PC-9 (cell line): ENCODE measurements at regions of chr3 and their contacts with region 1.

Region 1: GRCh38 chr3:56702490-56703315 is 19.6 kb upstream of the TASOR start:
- DNase-seq: peak; percentile 25 to 53
- H3K4me3 ChIP-seq: no peak overlapping the region
- H3K27ac ChIP-seq: no peak overlapping the region
- H3K4me1 ChIP-seq: no peaks in the 10 kb centered on the region
- H3K27me3 ChIP-seq: no peaks in the 10 kb centered on the region
- CTCF ChIP-seq: peak; percentile 84

Region 2: GRCh38 chr3:56801662-56802377 is 99.1 kb after region 1 on chr3 and contains the start of gene ARHGEF3:
- CTCF ChIA-PET with region 1: interaction called, 11 read pairs
- POLR2A ChIA-PET with region 1: no interaction called
- intact Hi-C with region 1: loop called (anchors 1 kb)
- DNase-seq: peak; percentile 60 to 76
- H3K4me3 ChIP-seq: peak within 1 kb of the TSS; percentile 67
- H3K27ac ChIP-seq: peak within 1 kb of the TSS; percentile 43
- H3K4me1 ChIP-seq: peaks cover 17% of the 10 kb centered on the region
- H3K27me3 ChIP-seq: no peaks in the 10 kb centered on the region
- CTCF ChIP-seq: peak; percentile 53; the same call in 1 of the 2 replicates
- total RNA-seq, gene ARHGEF3: 44.6 and 49.2 TPM in 2 replicates

Region 3: GRCh38 chr3:56980798-56981390 is 278.2 kb after region 1 on chr3:
- CTCF ChIA-PET with region 1: interaction called, 5 read pairs
- POLR2A ChIA-PET with region 1: no interaction called
- intact Hi-C with region 1: loop called (anchors 2 kb)
- DNase-seq: peak; percentile 69 to 86
- H3K4me3 ChIP-seq: no peak overlapping the region
- H3K27ac ChIP-seq: peak overlapping the region; percentile 56
- H3K4me1 ChIP-seq: peaks cover 10% of the 10 kb centered on the region
- H3K27me3 ChIP-seq: no peaks in the 10 kb centered on the region
- CTCF ChIP-seq: no peak

Region 4: GRCh38 chr3:57100046-57100695 is 397.5 kb after region 1 on chr3:
- CTCF ChIA-PET with region 1: no interaction called
- POLR2A ChIA-PET with region 1: no interaction called
- intact Hi-C with region 1: loop called (anchors 5 kb)
- DNase-seq: peak; percentile 48 to 63
- H3K4me3 ChIP-seq: no peak overlapping the region
- H3K27ac ChIP-seq: 0 out of 2 replicates have a peak overlapping the region, but pooled peaks have one; percentile 62
- H3K4me1 ChIP-seq: peaks cover 20% of the 10 kb centered on the region
- H3K27me3 ChIP-seq: no peaks in the 10 kb centered on the region
- CTCF ChIP-seq: peak; percentile 85

Region 5: DNA sequence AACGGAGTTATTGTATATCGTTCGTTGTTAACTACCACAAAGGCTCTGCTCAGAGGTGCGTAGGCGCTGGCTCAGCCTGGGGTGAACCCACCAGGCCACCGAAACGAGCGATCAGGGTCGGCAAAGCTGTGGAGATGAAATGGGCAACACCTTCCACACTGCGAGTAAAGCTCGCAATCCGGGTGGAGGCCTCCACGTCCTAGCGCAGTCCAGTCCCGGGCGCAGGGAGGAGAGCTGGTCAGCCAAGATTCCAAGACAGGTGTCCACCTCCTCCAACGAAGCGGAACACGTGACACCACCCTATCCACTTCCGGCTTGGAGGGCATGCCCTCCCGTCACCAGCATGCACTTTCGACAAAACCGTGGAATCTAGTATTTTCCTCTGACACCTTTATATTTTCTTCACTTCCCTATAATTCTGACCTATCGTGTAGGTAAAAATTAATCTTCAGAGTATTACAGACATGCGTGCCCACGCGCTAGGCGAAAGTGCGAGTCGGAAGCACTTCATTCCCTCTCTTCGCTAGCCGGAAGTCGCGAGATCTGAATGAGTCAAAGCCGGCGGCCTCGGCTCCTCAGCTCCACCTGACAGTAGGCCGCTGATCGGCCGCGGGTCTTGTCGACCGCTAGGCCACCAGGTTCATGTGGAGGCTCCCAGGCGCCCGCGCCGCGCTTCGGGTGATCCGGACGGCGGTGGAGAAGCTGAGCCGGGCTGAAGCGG is 853.2 kb after region 1 on chr3 and contains the start of gene PDE12:
- CTCF ChIA-PET with region 1: no interaction called
- POLR2A ChIA-PET with region 1: no interaction called
- intact Hi-C with region 1: loop called (anchors 5 kb)
- DNase-seq: peak; percentile 82 to 86
- H3K4me3 ChIP-seq: peak within 1 kb of the TSS; percentile 74
- H3K27ac ChIP-seq: peak within 1 kb of the TSS; percentile 92
- H3K4me1 ChIP-seq: peaks cover 12% of the 10 kb centered on the region; the same call in 1 of the 2 replicates
- H3K27me3 ChIP-seq: no peaks in the 10 kb centered on the region
- CTCF ChIP-seq: no peak
- total RNA-seq, gene PDE12: 14.3 and 16.6 TPM in 2 replicates